ENCODE measurements at regions of chr2 and their contacts with region 1.

Region 1: DNA sequence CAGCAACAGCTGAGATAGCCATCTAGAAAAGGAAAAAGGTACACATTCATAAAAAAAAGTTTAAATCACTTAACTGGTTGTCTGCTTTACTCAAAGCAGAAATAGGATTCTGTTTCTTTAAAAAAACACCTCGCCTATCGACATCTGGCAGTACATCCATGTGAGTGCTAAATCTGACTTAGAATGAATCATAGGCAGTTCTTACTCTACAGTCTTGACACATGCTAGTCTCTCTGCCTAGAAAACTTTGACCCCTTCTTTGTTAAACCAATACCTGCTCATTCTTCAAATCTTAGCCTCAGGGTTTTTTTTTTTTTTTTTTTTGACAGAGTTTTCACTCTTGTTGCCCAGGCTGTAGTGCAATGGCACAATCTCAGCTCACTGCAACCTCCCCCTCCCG is 37.1 kb upstream of the GPR75 start:
- DNase-seq: peak; percentile 77
- ATAC-seq: peak; percentile 63; the same call in 1 of the 2 replicates
- H3K4me3 ChIP-seq: no peak overlapping the region
- H3K27ac ChIP-seq: no peak overlapping the region
- H3K4me1 ChIP-seq: no peaks in the 10 kb centered on the region
- H3K27me3 ChIP-seq: no peaks in the 10 kb centered on the region
- CTCF ChIP-seq: no peak
- POLR2A ChIP-seq: no peak
- RAD21 ChIP-seq: no peak

Region 2: GRCh38 chr2:53067056-53067455 is 829.8 kb before region 1 on chr2:
- CTCF ChIA-PET with region 1: no interaction called
- POLR2A ChIA-PET with region 1: no interaction called
- dilution Hi-C with region 1: no loop called
- in situ Hi-C with region 1: no loop called
- intact Hi-C with region 1: no loop called
- DNase-seq: no peak
- ATAC-seq: no peak
- H3K4me3 ChIP-seq: no peak overlapping the region
- H3K27ac ChIP-seq: no peak overlapping the region
- H3K4me1 ChIP-seq: no peaks in the 10 kb centered on the region
- H3K27me3 ChIP-seq: no peaks in the 10 kb centered on the region
- CTCF ChIP-seq: no peak
- POLR2A ChIP-seq: no peak
- RAD21 ChIP-seq: no peak

Region 3: DNA sequence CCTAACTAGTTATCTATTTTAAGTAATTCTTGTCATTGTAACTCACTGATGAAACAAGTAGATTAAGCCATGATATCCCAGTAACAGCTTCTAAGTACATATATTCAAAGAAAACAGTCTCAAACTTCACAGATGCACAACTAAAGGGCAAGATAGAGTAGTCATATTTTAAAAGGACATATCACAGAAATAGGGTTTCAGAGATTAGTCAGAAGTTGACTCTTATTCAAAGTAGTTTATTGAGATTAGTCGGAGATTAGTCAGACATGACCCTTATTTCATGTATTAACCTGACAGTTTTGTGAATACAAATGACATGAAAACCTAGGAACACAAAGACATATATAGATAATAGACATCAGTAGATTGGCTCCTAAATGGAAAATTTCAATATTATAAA is 145.1 kb before region 1 on chr2:
- CTCF ChIA-PET with region 1: no interaction called
- POLR2A ChIA-PET with region 1: no interaction called
- dilution Hi-C with region 1: no loop called
- in situ Hi-C with region 1: no loop called
- intact Hi-C with region 1: no loop called
- DNase-seq: peak; percentile 71
- ATAC-seq: peak; percentile 80
- H3K4me3 ChIP-seq: no peak overlapping the region
- H3K27ac ChIP-seq: no peak overlapping the region
- H3K4me1 ChIP-seq: no peaks in the 10 kb centered on the region
- H3K27me3 ChIP-seq: no peaks in the 10 kb centered on the region
- CTCF ChIP-seq: no peak
- POLR2A ChIP-seq: no peak
- RAD21 ChIP-seq: no peak

Region 4: DNA sequence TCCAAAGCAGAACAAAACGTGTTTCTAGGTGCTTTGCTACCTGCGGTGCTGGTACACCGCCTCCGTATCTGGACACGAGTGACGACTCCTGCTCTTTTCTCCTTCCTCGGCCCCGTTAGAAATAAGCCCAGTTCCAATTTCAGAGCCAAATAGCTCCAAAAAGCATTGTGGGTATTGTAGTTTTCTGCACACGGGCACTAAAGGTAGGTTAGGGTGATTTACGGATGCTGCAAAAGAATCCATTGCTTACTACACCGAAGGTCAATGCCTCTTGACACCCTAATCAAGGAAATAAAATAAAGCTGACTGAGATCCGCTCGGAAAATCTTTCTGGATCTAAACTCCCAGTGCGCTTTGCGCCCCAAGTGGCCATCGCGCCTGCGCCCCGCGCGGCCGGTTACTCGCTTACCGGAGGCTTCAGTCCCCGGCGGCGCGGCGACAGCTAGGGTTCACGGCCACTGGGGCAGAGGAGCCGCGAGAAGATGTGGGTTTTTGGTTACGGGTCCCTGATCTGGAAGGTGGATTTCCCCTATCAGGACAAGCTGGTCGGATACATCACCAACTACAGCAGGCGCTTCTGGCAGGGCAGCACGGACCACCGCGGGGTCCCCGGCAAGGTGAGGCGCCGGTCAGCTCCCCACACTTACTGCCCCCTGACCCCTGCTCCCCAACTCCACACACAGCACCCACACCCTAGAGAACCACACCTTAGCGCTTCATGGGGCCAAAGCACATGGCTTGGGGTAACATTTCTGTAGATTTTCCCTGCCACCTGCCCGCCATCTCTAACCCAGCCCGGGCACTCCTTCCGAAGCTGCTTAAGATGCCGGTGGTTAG is 129.2 kb before region 1 on chr2 and contains the start of gene CHAC2:
- CTCF ChIA-PET with region 1: no interaction called
- POLR2A ChIA-PET with region 1: no interaction called
- dilution Hi-C with region 1: no loop called
- in situ Hi-C with region 1: no loop called
- intact Hi-C with region 1: no loop called
- DNase-seq: peak; percentile 78
- ATAC-seq: peak; percentile 96
- H3K4me3 ChIP-seq: peak within 1 kb of the TSS; percentile 70
- H3K27ac ChIP-seq: peak within 1 kb of the TSS; percentile 83
- H3K4me1 ChIP-seq: no peaks in the 10 kb centered on the region
- H3K27me3 ChIP-seq: no peaks in the 10 kb centered on the region
- CTCF ChIP-seq: no peak; the same call in 1 of the 2 replicates
- POLR2A ChIP-seq: peak; percentile 61; the same call in 1 of the 2 replicates
- RAD21 ChIP-seq: no peak
- total RNA-seq, gene CHAC2: 3.9 and 6.9 TPM in 2 replicates

Region 5: GRCh38 chr2:53813151-53813550 is 83.7 kb before region 1 on chr2:
- CTCF ChIA-PET with region 1: no interaction called
- POLR2A ChIA-PET with region 1: no interaction called
- dilution Hi-C with region 1: no loop called
- in situ Hi-C with region 1: no loop called
- intact Hi-C with region 1: loop called (anchors 5 kb)
- DNase-seq: no peak
- ATAC-seq: no peak
- H3K4me3 ChIP-seq: no peak overlapping the region
- H3K27ac ChIP-seq: no peak overlapping the region
- H3K4me1 ChIP-seq: no peaks in the 10 kb centered on the region
- H3K27me3 ChIP-seq: no peaks in the 10 kb centered on the region
- CTCF ChIP-seq: no peak
- POLR2A ChIP-seq: no peak
- RAD21 ChIP-seq: no peak

Region 6: GRCh38 chr2:53826587-53827397 is 70.1 kb before region 1 on chr2:
- CTCF ChIA-PET with region 1: no interaction called
- POLR2A ChIA-PET with region 1: no interaction called
- dilution Hi-C with region 1: no loop called
- in situ Hi-C with region 1: no loop called
- intact Hi-C with region 1: no loop called
- DNase-seq: peak; percentile 29
- ATAC-seq: peak; percentile 68
- H3K4me3 ChIP-seq: no peak overlapping the region
- H3K27ac ChIP-seq: no peak overlapping the region; the same call in 1 of the 2 replicates
- H3K4me1 ChIP-seq: 0 out of 2 replicates have a peak, but pooled peaks cover 5% of the 10 kb centered on the region
- H3K27me3 ChIP-seq: no peaks in the 10 kb centered on the region
- CTCF ChIP-seq: no peak
- POLR2A ChIP-seq: no peak
- RAD21 ChIP-seq: no peak

Region 7: GRCh38 chr2:53886406-53887280 is 10.2 kb before region 1 on chr2:
- CTCF ChIA-PET with region 1: no interaction called
- POLR2A ChIA-PET with region 1: no interaction called
- dilution Hi-C with region 1: no loop called
- in situ Hi-C with region 1: no loop called
- intact Hi-C with region 1: loop called (anchors 2 kb)
- DNase-seq: no peak
- ATAC-seq: no peak
- H3K4me3 ChIP-seq: no peak overlapping the region
- H3K27ac ChIP-seq: no peak overlapping the region
- H3K4me1 ChIP-seq: no peaks in the 10 kb centered on the region
- H3K27me3 ChIP-seq: no peaks in the 10 kb centered on the region
- CTCF ChIP-seq: no peak
- POLR2A ChIP-seq: no peak
- RAD21 ChIP-seq: no peak

Region 8: GRCh38 chr2:53933329-53933728 is 36.5 kb after region 1 on chr2:
- CTCF ChIA-PET with region 1: no interaction called
- POLR2A ChIA-PET with region 1: no interaction called
- dilution Hi-C with region 1: no loop called
- in situ Hi-C with region 1: no loop called
- intact Hi-C with region 1: loop called (anchors 5 kb)
- DNase-seq: no peak
- ATAC-seq: no peak
- H3K4me3 ChIP-seq: no peak overlapping the region
- H3K27ac ChIP-seq: no peak overlapping the region; the same call in 1 of the 2 replicates
- H3K4me1 ChIP-seq: no peaks in the 10 kb centered on the region
- H3K27me3 ChIP-seq: no peaks in the 10 kb centered on the region
- CTCF ChIP-seq: no peak
- POLR2A ChIP-seq: no peak
- RAD21 ChIP-seq: no peak

Measured in IMR-90 (cell line).